Heart right ventricle (tissue), 16 donors: ENCODE measurements at regions of chr12 and their contacts with region 1.

Region 1: DNA sequence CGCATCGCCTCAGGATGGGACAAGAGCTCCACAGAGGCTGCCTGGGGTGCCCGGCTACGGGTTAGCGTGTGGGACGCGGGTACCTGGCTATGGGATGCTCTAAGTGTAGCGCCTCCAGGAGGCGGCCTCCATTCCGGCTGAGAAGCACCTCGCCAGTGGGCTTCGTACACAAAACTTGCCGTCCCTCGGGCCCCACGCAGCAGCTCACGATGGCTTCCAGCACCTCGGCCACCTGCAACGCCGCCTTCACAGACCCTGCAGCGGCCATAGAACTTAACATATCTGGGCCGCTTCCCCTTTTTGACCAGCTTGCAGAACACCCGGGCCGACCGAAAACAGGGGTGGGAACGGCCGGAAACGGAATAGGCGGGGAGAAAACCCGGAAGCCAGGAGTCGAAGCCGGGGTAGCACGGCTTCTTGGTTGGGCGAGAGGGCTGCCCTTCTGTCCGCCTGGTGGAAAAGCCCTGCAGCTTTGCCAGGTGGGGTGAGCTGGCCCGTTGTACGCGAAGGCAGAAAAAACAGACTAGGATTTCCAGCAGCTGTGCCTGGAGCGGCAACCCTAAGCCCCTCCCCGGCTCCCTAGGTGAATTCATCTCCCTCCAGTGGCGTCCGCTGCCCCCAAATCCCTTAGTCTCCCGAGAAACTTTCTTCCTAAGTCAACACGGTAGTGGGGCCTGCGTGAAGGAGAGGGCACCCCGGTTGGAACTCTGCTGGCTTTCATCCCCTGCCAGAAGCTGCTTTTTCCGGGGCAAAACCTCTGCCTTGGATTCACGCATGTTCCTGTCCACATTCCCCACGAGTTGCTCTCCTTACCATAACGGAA is at the start of gene BBS10:
- DNase-seq: peak; percentile 90 to 94
- ATAC-seq: peak; percentile 97 to 99 (median 98)
- H3K4me3 ChIP-seq: peak within 1 kb of the TSS; percentile 48 to 96 (median 80)
- H3K27ac ChIP-seq: peak within 1 kb of the TSS; percentile 55 to 93 (median 89)
- H3K4me1 ChIP-seq: peaks cover 0 to 40% (median 30%) of the 10 kb centered on the region in 9 donors
- H3K27me3 ChIP-seq: no peaks in the 10 kb centered on the region
- CTCF ChIP-seq: peak in 6 of 9 donors; percentile 29 to 64 (median 47)
- total RNA-seq, gene BBS10: 5.6 to 11.0 (median 9.0) TPM

Region 2: DNA sequence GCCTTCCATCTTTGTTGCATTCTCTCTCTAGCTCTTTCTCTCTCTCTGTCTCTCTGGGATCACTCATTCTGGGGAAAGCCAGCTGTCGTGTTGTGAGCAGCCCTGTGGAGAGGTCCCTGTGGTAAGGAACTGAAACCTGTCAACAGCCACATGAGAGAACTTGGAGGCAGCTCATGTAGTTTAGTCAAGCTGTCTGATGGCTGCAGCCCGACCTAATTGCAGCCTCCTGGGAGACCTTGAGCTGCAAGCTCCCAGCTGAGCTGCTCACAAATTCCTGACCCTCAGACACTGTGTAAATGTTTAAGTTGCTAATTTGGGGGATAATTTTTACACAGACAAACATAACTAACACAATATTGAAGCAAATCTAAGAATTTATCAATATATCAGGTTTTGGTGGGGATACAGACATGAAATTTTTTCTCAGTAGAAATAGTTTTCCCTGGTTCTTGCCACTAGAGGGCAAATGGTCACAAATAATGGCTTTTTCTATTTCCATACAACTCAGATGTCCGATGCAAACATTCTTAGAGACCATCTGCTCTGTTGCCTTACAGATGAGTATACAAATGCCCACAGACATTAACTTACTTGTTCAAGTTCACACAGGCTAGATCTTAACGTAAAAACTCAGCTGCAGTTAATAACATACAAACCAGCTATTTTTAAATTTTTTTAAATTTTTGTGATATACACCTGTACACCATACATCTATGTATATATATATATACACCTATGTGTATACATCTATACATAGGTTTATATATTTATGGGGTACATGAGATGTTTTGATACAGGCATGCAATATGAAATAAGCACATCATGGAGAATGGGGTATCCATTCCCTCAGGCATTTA is 821.4 kb before region 1 on chr12:
- intact Hi-C with region 1: loop called in 3 of 10 experiments (anchors 5 to 10 kb)
- DNase-seq: no peak
- ATAC-seq: peak in 6 of 8 donors; percentile 20 to 68 (median 52)
- H3K4me3 ChIP-seq: no peak overlapping the region
- H3K27ac ChIP-seq: no peak overlapping the region
- H3K4me1 ChIP-seq: peaks cover 0 to 9% (median 0%) of the 10 kb centered on the region in 9 donors
- H3K27me3 ChIP-seq: peaks cover 0 to 6% (median 0%) of the 10 kb centered on the region in 7 donors
- CTCF ChIP-seq: peak; percentile 57 to 80 (median 67)

Region 3: DNA sequence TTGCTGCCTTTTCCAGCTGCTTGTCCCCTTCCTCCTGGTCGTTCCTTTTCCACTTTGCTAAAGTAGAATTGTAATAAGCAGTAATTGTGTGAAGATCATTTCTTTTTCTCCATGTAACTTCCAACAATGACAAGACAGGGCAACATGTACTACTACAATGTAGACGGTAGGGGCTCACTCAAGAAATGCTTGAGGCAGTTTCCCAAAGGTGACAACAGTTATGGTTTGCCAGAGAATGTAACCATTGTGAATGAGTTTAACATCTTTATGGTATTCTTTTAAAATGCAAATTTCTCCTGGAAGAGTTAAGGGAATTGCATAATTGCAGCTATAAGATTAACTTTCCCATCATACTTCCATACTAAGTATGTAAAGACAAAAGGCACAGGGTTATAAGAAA is 292.9 kb before region 1 on chr12:
- intact Hi-C with region 1: loop called in 2 of 10 experiments (anchors 10 kb)
- DNase-seq: no peak
- ATAC-seq: no peak
- H3K4me3 ChIP-seq: no peak overlapping the region
- H3K27ac ChIP-seq: no peak overlapping the region
- H3K4me1 ChIP-seq: no peaks in the 10 kb centered on the region
- H3K27me3 ChIP-seq: no peaks in the 10 kb centered on the region
- CTCF ChIP-seq: no peak

Region 4: GRCh38 chr12:76266797-76267196 is 81.5 kb before region 1 on chr12:
- intact Hi-C with region 1: loop called in 2 of 10 experiments (anchors 5 to 10 kb)
- DNase-seq: peak in 1 of 2 donors; percentile 36
- ATAC-seq: peak in 7 of 8 donors; percentile 73 to 99 (median 90)
- H3K4me3 ChIP-seq: no peak overlapping the region
- H3K27ac ChIP-seq: peak overlapping the region in 1 of 10 donors; percentile 38
- H3K4me1 ChIP-seq: peaks cover 0 to 13% (median 5%) of the 10 kb centered on the region in 9 donors
- H3K27me3 ChIP-seq: peaks cover 0 to 4% (median 0%) of the 10 kb centered on the region in 7 donors
- CTCF ChIP-seq: no peak

Region 5: GRCh38 chr12:76391461-76391860 is 43.2 kb after region 1 on chr12:
- intact Hi-C with region 1: no loop called
- DNase-seq: no peak
- ATAC-seq: no peak
- H3K4me3 ChIP-seq: no peak overlapping the region
- H3K27ac ChIP-seq: no peak overlapping the region
- H3K4me1 ChIP-seq: no peaks in the 10 kb centered on the region
- H3K27me3 ChIP-seq: no peaks in the 10 kb centered on the region
- CTCF ChIP-seq: no peak

Region 6: DNA sequence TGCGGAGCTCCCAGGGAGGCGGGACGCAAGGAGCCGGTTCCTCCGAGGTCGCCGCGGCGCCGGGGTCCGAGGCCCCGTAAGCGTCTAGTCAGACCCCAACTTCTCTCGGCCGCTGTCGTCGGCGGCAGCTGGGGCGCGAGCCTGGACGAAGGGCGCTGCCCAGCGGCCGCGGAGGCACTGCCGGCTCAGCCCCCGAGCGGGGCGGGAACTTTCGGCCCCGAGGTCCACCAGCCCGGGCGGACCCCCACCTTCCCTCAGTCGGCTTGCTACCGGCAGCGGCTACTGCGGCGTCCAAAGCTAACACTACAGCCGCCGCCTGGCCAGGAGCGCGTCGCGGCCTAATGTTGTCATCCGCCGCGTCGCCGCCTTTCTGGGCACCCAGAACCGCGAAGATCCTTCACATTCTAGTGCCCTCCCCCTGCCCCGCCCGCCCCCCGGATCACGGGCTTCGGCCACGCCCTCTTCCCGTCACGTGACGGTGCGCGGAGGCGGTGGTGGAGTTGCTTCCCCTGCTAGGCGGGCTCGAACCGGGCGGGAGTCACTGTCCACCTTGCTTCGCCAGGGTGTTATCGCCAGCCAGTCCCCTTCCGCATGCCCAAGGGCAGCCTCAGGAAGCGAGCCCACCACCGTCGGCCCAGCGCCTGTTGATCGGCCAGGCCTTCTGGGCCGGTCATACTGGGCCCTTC is 211.3 kb after region 1 on chr12 and contains the start of gene OSBPL8:
- intact Hi-C with region 1: loop called in 2 of 10 experiments (anchors 5 to 10 kb)
- DNase-seq: peak; percentile 96 to 97
- ATAC-seq: peak; percentile 97 to 99 (median 98)
- H3K4me3 ChIP-seq: peak within 1 kb of the TSS; percentile 84 to 97 (median 94)
- H3K27ac ChIP-seq: peak within 1 kb of the TSS; percentile 67 to 99 (median 94)
- H3K4me1 ChIP-seq: peaks cover 0 to 49% (median 32%) of the 10 kb centered on the region in 9 donors
- H3K27me3 ChIP-seq: no peaks in the 10 kb centered on the region
- CTCF ChIP-seq: peak in 5 of 9 donors; percentile 32 to 68 (median 62)
- total RNA-seq, gene OSBPL8: 25.5 to 50.0 (median 37.0) TPM